ENCODE measurements at regions of chr3 and their contacts with region 1.

Region 1: GRCh38 chr3:39406368-39407258 is at the start of gene RPSA:
- DNase-seq: peak; percentile 98
- H3K4me3 Mint-ChIP-seq: peak within 1 kb of the TSS; percentile 95
- H3K27ac Mint-ChIP-seq: peak within 1 kb of the TSS; percentile 99
- H3K4me1 Mint-ChIP-seq: peaks cover 46% of the 10 kb centered on the region
- H3K27me3 Mint-ChIP-seq: peaks cover 2% of the 10 kb centered on the region
- total RNA-seq, gene RPSA: 2,627 to 2,738 TPM

Region 2: GRCh38 chr3:39051647-39052561 is 354.7 kb before region 1 on chr3 and contains the starts of genes SCN11A and WDR48:
- CTCF ChIA-PET with region 1: no interaction called
- POLR2A ChIA-PET with region 1: no interaction called
- intact Hi-C with region 1: loop called (anchors 1 kb)
- DNase-seq: peak; percentile 96
- H3K4me3 Mint-ChIP-seq: peak within 1 kb of the TSS; percentile 92
- H3K27ac Mint-ChIP-seq: peak within 1 kb of the TSS; percentile 96
- H3K4me1 Mint-ChIP-seq: peaks cover 64% of the 10 kb centered on the region
- H3K27me3 Mint-ChIP-seq: no peaks in the 10 kb centered on the region
- total RNA-seq, gene SCN11A: 0.02 to 0.05 TPM
- total RNA-seq, gene WDR48: 38.5 to 43.8 TPM

Region 3: DNA sequence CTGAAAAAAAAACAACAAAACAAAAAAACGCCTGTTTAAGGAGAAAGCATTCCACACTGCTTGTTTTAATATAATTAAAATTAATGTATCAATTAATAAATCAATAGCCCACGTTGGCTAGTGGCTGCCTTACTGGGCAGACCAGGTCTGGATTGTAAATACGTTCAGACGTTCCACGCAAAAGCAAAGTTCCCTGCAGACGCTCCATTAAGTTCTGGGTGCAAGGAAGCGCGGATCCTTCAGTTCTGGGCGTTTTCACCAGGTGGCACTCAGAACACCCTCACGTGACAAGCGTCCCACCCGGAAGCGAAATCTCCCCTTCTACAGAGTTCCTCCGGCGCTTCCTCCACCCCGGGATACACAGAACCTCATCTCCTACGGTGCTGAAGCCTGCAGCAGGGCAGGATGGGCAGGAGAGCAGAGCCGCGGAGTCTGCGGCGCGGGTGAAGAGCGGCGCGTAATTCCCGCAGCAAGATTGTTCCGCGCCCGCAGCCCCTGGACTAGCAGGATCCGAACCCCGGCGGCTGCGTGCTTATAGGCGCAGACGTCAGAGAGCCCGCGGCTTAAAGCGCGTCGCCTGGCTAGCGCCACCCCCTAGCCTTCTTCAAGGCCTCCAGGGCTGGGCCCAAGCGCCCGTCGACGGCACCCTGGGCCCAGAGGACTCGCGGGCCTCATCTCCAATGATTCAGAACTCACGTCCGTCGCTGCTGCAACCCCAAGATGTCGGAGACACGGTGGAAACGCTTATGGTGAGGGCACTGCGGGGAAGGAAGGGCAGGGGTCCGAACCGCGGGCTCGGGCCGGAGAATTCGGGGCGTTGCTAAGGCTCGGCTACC is 23.4 kb before region 1 on chr3 and contains the start of gene SLC25A38:
- CTCF ChIA-PET with region 1: interaction called, 6 read pairs
- POLR2A ChIA-PET with region 1: interaction called, 26 read pairs
- intact Hi-C with region 1: loop called (anchors 1 kb)
- DNase-seq: peak; percentile 89
- H3K4me3 Mint-ChIP-seq: peak within 1 kb of the TSS; percentile 93
- H3K27ac Mint-ChIP-seq: peak within 1 kb of the TSS; percentile 97
- H3K4me1 Mint-ChIP-seq: peaks cover 36% of the 10 kb centered on the region
- H3K27me3 Mint-ChIP-seq: no peaks in the 10 kb centered on the region
- total RNA-seq, gene SLC25A38: 23.1 to 24.9 TPM

Region 4: DNA sequence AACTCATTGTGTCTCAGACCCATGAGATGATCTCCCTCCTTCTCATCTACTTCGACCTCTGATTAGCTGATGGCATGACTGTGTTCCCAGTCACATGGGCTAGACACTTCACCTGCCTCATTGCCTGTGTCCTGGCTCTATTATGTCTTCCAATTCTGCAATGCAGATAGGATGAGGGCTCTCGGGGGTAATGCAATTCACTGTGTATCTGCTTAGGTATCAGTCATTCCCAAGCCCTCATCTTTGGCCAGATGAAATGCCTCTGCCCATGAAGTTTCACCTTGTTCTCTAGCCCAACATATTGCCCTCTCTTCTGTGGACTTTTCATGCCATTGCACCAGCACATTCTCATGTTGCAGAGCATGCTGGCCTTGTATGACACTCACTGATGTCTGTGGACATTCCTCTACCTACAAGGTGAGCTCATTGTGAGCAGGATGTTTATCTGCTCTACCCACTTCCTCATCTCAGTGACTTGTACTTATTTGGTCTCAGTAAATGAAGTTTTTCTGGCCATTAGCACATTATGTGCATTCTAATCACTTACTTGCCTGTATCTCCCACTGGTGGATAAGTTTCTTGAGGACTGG is 93.1 kb after region 1 on chr3:
- CTCF ChIA-PET with region 1: interaction called, 4 read pairs
- POLR2A ChIA-PET with region 1: no interaction called
- intact Hi-C with region 1: loop called (anchors 1 kb)
- DNase-seq: no peak
- H3K4me3 Mint-ChIP-seq: no peak overlapping the region
- H3K27ac Mint-ChIP-seq: no peak overlapping the region
- H3K4me1 Mint-ChIP-seq: no peaks in the 10 kb centered on the region
- H3K27me3 Mint-ChIP-seq: peaks cover 29% of the 10 kb centered on the region

Region 5: GRCh38 chr3:39515681-39516441 is 109.2 kb after region 1 on chr3:
- CTCF ChIA-PET with region 1: no interaction called
- POLR2A ChIA-PET with region 1: no interaction called
- intact Hi-C with region 1: no loop called
- DNase-seq: no peak
- H3K4me3 Mint-ChIP-seq: no peak overlapping the region
- H3K27ac Mint-ChIP-seq: no peak overlapping the region
- H3K4me1 Mint-ChIP-seq: no peaks in the 10 kb centered on the region
- H3K27me3 Mint-ChIP-seq: peaks cover 18% of the 10 kb centered on the region

Region 6: GRCh38 chr3:40237889-40238571 is 831.4 kb after region 1 on chr3:
- CTCF ChIA-PET with region 1: no interaction called
- POLR2A ChIA-PET with region 1: no interaction called
- intact Hi-C with region 1: no loop called
- DNase-seq: no peak
- H3K4me3 Mint-ChIP-seq: no peak overlapping the region
- H3K27ac Mint-ChIP-seq: no peak overlapping the region
- H3K4me1 Mint-ChIP-seq: no peaks in the 10 kb centered on the region
- H3K27me3 Mint-ChIP-seq: no peaks in the 10 kb centered on the region

Region 7: DNA sequence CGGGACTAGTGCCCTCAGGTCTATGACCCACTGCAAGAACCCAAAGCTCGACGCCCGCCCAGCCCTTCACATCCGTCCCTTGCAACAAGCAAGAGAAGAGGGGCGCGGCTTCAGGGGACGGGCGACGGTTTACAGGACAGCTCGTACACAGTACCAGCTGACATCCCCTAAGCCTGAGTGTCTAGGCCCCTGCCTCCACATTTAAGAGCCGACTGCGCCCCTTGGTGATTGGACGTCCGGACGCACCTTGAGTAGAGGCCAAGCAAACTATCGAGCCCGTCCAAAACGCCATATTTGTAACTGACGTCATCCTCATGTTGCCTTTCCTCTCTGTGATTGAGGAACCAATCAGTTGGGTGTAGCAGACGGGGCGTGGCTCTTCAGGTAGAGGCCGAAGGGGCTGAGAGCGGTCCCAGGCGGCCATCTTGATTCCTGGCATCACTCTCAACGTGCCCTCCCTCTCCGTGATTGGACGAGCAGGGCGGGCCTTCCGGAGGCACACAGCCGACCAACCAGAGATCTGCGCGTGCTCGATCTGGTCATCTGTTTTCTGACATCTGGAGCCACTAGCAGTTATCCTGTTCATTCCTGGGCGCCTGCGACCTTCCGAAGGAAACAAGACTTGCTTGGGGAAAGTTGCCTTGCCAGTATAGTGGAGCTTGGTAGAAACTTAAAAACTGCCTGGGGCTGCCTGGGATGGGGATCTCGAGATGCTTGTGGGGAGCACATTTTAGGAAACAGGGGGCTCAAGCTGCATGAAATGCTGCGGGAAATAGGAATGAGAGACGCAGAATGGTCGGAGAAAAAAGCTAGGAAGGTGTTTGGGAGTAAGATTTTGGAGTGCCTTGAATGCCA is 1046.5 kb after region 1 on chr3:
- CTCF ChIA-PET with region 1: no interaction called
- POLR2A ChIA-PET with region 1: interaction called, 4 read pairs
- intact Hi-C with region 1: loop called (anchors 2 kb)
- DNase-seq: peak; percentile 98
- H3K4me3 Mint-ChIP-seq: peak overlapping the region; percentile 93
- H3K27ac Mint-ChIP-seq: peak overlapping the region; percentile 96
- H3K4me1 Mint-ChIP-seq: peaks cover 32% of the 10 kb centered on the region
- H3K27me3 Mint-ChIP-seq: peaks cover 1% of the 10 kb centered on the region